Common myeloid progenitor, CD34-positive (primary cell): ENCODE measurements at regions of chr2 and their contacts with region 1.

Region 1: GRCh38 chr2:67204349-67204748 is 192.8 kb upstream of the ETAA1 start:
- DNase-seq: no peak
- H3K4me3 ChIP-seq: no peak overlapping the region
- H3K27ac ChIP-seq: no peak overlapping the region
- H3K4me1 ChIP-seq: no peaks in the 10 kb centered on the region
- H3K27me3 ChIP-seq: peaks cover 0 to 2% (median 0%) of the 10 kb centered on the region in 5 experiments

Region 2: GRCh38 chr2:67215214-67216055 is 11.1 kb after region 1 on chr2:
- CTCF ChIA-PET with region 1: interaction called, 15 read pairs
- POLR2A ChIA-PET with region 1: no interaction called
- DNase-seq: peak; percentile 57 to 70 (median 68)
- H3K4me3 ChIP-seq: no peak overlapping the region
- H3K27ac ChIP-seq: no peak overlapping the region
- H3K4me1 ChIP-seq: peaks cover 0 to 3% (median 0%) of the 10 kb centered on the region in 4 experiments
- H3K27me3 ChIP-seq: no peaks in the 10 kb centered on the region